ENCODE measurements at regions of chr19 and their contacts with region 1.

Region 1: GRCh38 chr19:9205501-9206113 is 13.8 kb downstream of the OR7D4 start:
- DNase-seq: peak; percentile 16
- H3K4me3 ChIP-seq: peak overlapping the region; percentile 29
- H3K27ac ChIP-seq: no peak overlapping the region
- H3K27me3 ChIP-seq: no peaks in the 10 kb centered on the region
- CTCF ChIP-seq: peak; percentile 82

Region 2: DNA sequence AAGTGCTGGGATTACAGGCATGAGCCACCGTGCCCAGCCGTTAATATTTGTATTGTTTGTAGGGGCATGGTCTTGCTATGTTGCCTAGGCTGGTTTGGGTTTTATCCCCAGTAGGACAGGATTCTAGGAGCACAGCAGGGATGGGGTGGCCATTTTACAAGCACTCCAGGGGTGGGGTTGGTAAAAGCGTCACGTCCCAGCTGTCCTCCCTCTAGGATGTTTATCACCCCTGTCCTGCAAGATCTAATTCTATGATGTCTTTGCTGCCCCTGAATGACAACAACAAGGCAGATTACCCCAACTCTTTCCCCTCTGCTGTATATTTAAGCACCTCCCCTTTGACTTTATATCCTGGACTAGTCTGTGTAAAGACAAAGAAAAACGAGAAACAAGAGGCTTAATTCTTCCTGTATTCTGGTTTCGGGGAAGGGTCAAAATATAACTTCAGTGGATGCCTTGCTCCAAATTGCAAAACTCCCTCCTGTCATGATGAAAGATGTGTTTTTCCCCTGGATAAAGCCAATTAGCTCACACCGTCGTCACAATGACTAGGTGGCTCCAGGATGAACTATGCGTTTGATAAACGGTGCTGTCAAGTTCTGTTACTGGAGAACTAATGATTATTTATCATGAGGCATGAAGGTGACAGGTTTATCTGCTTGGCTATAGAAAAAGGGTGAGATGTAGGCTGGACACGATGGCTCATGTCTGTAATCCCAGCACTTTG is 146.5 kb before region 1 on chr19:
- CTCF ChIA-PET with region 1: no interaction called
- POLR2A ChIA-PET with region 1: no interaction called
- DNase-seq: no peak
- H3K4me3 ChIP-seq: no peak overlapping the region
- H3K27ac ChIP-seq: no peak overlapping the region
- H3K27me3 ChIP-seq: no peaks in the 10 kb centered on the region
- CTCF ChIP-seq: no peak

Region 3: DNA sequence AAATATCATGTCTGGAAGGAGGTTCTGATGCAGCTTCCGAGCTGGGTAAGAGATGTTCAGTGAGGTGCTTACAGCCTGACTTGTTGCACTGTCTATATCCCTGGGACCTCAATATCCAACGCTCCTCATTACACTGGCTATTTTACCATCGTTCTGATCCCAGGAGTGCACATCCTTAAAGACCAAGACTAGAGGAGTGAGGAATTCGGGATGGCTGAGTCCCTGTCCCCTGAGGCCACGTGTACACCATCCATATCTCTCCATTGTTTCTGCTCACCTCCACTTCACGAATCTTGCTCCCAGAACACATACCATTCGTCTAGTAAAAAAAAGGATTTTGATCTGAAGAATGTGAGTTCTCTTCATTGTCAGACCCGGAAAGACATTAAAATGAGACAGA is 98.2 kb before region 1 on chr19 and contains the start of gene OR7G2:
- CTCF ChIA-PET with region 1: no interaction called
- POLR2A ChIA-PET with region 1: no interaction called
- DNase-seq: no peak
- H3K4me3 ChIP-seq: no peak within 1 kb of the TSS
- H3K27ac ChIP-seq: no peak within 1 kb of the TSS
- H3K27me3 ChIP-seq: no peaks in the 10 kb centered on the region
- CTCF ChIP-seq: no peak
- polyA plus RNA-seq, gene OR7G2: not detected in 2 replicates

Region 4: DNA sequence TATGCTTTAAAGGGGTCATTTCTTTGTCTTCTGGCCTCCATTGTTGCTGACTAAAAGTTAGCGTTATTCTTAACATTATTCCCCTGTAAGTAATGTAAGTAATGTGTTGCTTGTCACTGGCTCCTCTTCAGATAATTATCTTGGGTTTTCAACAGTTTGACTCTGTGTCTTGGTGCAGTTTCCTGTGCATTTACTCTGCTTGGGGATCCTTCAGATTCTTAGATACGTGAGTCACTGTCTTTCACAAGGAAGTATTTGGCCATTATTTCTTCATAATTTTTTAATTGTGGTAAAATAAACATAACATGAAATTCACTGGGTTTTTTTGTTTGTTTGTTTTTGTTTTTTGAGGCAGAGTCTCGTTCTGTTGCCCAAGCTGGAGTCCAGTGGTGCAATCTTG is 40.4 kb before region 1 on chr19:
- CTCF ChIA-PET with region 1: no interaction called
- POLR2A ChIA-PET with region 1: no interaction called
- DNase-seq: no peak
- H3K4me3 ChIP-seq: no peak overlapping the region
- H3K27ac ChIP-seq: no peak overlapping the region
- H3K27me3 ChIP-seq: no peaks in the 10 kb centered on the region
- CTCF ChIP-seq: no peak

Region 5: DNA sequence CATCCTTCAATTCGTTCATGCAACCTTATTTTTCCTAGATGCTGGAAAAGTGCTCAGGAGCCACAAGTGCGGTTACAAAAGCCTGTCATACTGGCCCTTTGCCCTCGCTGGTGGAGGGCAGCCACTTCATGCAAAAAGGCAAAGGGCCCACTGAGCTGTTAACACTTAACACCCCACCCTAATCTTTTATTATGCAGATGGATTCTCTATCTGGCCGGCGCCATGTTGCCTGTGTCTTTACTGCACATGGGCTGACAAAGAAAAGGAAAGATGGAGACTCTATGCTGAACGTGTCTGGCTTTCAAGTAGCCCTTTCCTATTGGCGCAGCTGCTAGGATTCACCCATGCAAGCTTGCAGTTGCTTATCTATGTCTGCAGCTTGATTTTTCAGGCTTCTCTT is 16.1 kb before region 1 on chr19:
- CTCF ChIA-PET with region 1: interaction called, 15 read pairs
- POLR2A ChIA-PET with region 1: no interaction called
- DNase-seq: no peak
- H3K4me3 ChIP-seq: no peak overlapping the region
- H3K27ac ChIP-seq: no peak overlapping the region
- H3K27me3 ChIP-seq: no peaks in the 10 kb centered on the region
- CTCF ChIP-seq: no peak

Region 6: GRCh38 chr19:9584073-9584833 is 378.6 kb after region 1 on chr19 and contains the start of gene ZNF121:
- CTCF ChIA-PET with region 1: interaction called, 16 read pairs
- POLR2A ChIA-PET with region 1: no interaction called
- DNase-seq: peak; percentile 34
- H3K4me3 ChIP-seq: peak within 1 kb of the TSS; percentile 96
- H3K27ac ChIP-seq: peak within 1 kb of the TSS; percentile 79
- H3K27me3 ChIP-seq: no peaks in the 10 kb centered on the region
- CTCF ChIP-seq: 0 out of 2 replicates have a peak, but pooled peaks have one; percentile 1
- polyA plus RNA-seq, gene ZNF121: 5.3 and 6.1 TPM in 2 replicates

Measured in AG04450 (cell line).